ENCODE measurements at regions of chr2 and their contacts with region 1.

Region 1: GRCh38 chr2:197279997-197280746 is 30.4 kb downstream of the ANKRD44 start:
- DNase-seq: no peak
- H3K4me3 ChIP-seq: no peak overlapping the region
- H3K27ac ChIP-seq: no peak overlapping the region
- H3K4me1 ChIP-seq: peaks cover 25% of the 10 kb centered on the region
- CTCF ChIP-seq: no peak

Region 2: GRCh38 chr2:197268786-197269584 is 11.2 kb before region 1 on chr2:
- CTCF ChIA-PET with region 1: no interaction called
- POLR2A ChIA-PET with region 1: interaction called, 12 read pairs
- intact Hi-C with region 1: no loop called
- DNase-seq: no peak
- H3K4me3 ChIP-seq: no peak overlapping the region
- H3K27ac ChIP-seq: no peak overlapping the region
- H3K4me1 ChIP-seq: peaks cover under 1% of the 10 kb centered on the region
- CTCF ChIP-seq: no peak

Measured in OCI-LY7 (cell line).